Activated CD4-positive, alpha-beta memory T cell treated with anti-CD3 and anti-CD28 coated beads for 36 hours (primary cell): ENCODE measurements at regions of chr6 and their contacts with region 1.

Region 1: DNA sequence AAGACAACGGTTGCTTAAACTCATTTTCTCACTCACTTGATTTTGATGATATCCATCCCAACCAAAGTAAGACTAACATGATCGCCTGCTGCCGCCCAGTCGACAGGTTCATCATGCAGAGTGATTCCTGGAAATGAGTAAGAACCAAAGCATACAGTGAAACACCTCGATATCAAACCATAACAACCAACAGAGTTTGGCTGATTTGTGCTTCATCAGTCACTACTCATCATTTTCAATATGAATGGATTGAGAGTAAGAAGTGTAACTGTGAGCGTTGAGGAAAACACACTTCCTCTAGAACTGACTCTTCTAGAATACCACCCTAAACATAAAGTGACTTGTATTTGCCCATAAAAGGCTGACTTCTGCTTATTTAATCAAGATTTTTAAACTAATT is 29.2 kb upstream of the ALDH8A1 start:
- DNase-seq: peak; percentile 78
- H3K4me3 Mint-ChIP-seq: no peak overlapping the region
- H3K27ac Mint-ChIP-seq: peak overlapping the region; percentile 72
- H3K4me1 Mint-ChIP-seq: peaks cover 45% of the 10 kb centered on the region
- H3K27me3 Mint-ChIP-seq: no peaks in the 10 kb centered on the region

Region 2: GRCh38 chr6:134954272-134955000 is 24.7 kb before region 1 on chr6:
- CTCF ChIA-PET with region 1: no interaction called
- POLR2A ChIA-PET with region 1: no interaction called
- intact Hi-C with region 1: loop called (anchors 1 kb)
- DNase-seq: no peak
- H3K4me3 Mint-ChIP-seq: no peak overlapping the region
- H3K27ac Mint-ChIP-seq: no peak overlapping the region
- H3K4me1 Mint-ChIP-seq: peaks cover 16% of the 10 kb centered on the region
- H3K27me3 Mint-ChIP-seq: no peaks in the 10 kb centered on the region

Region 3: DNA sequence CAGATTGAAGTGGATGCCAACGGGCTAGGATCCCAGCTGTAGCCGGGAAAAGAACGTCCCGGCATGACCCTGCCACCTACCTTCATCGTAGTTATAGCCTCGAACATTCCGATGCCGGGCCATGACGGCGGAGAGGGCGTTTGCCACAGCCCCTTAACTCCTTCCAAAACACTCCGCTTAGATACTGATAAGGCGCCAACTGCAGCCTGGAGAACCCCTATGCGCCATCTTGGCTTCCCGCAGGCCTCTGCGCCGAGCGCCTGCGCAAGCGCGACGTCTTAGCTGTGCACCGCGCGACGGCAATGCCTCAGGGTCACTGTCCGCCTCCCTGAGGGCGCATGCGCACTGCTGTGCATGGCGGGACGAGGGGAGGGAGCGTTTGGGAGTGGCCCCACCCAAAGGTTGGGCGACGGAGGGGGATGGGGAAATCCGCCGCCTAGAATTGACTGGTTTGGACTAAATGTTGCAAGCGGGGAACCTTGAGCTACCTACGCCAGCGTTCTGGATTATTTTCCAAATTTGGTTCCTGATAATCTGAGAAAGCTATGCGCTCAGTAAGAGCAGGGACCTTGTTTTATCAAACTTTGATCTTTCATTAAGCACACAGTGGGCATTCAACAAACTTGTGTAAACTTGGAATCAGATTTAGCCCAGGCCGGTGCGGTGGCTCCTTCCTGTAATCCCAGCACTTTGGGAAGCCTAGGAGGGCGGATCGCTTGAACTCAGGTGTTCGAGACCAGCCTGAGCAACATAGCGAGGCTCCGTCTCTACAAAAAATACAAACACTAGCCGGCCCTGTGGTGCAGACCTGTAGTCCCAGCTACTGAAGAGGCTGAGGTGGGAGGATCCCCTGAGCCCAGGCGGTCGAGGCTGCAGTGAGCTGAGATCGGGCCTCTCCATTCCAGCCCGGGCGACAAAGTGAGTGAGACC is 75.7 kb after region 1 on chr6 and contains the start of gene HBS1L:
- CTCF ChIA-PET with region 1: no interaction called
- POLR2A ChIA-PET with region 1: interaction called, 3 read pairs
- intact Hi-C with region 1: loop called (anchors 1 kb)
- DNase-seq: peak; percentile 98
- H3K4me3 Mint-ChIP-seq: peak within 1 kb of the TSS; percentile 92
- H3K27ac Mint-ChIP-seq: peak within 1 kb of the TSS; percentile 96
- H3K4me1 Mint-ChIP-seq: peaks cover 34% of the 10 kb centered on the region
- H3K27me3 Mint-ChIP-seq: no peaks in the 10 kb centered on the region
- total RNA-seq, gene HBS1L: 117 to 123 TPM

Region 4: DNA sequence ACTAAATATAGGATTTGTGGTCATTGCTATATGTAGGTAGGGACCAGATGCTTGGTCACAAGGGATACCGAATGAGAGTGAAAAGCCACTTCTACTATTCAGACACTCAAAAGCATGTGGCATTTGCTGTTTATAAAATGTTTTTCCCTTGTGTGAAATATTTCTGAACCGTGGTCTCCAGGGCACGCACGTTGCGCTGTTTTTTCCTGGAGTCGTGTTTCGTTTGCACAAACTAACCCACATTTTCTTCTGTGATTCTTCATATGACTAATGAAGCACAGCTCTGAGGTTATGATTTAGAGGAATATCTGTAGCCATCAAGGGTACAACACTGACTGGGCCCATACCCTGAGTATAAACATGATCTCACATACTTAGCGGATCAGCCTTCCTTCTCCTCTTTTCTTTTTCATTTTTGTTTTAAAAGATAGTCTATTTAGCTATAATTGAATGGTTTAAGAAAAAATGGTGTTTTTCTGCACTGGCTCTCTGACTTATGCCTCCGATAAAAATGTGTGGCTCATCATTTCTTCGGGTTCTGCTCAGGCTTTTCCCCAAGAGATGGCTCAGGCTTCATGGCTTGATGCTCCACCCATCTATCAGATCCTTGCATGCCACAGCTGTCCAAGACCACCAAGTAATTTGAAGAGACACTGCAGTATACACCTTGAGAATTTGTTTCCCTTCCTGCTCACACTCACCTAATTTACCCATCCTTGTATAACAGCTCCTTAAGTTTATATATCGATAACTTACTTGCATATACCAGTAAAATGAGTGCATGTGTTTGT is 135.4 kb after region 1 on chr6:
- CTCF ChIA-PET with region 1: no interaction called
- POLR2A ChIA-PET with region 1: no interaction called
- intact Hi-C with region 1: loop called (anchors 1 kb)
- DNase-seq: peak; percentile 86
- H3K4me3 Mint-ChIP-seq: peak overlapping the region; percentile 44
- H3K27ac Mint-ChIP-seq: peak overlapping the region; percentile 96
- H3K4me1 Mint-ChIP-seq: peaks cover 65% of the 10 kb centered on the region
- H3K27me3 Mint-ChIP-seq: no peaks in the 10 kb centered on the region

Region 5: DNA sequence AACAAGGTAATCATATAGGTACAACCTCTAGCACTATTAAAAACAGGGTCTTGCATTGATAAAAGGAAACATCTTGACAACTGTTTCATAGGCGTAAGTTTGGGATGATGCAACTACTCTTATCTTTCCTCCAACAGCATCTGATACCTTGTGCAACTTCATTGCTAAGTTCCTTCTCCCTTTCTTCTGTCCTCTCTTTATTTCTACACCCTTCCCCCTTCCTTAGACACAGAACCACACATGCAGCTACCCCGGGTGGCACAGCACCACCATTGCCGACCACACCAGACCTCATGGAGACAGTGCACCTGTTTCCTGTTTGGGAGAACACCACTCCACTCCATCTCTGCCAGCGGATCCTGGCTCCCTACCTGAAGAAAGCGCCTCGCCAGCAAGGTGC is 216.4 kb after region 1 on chr6:
- CTCF ChIA-PET with region 1: no interaction called
- POLR2A ChIA-PET with region 1: no interaction called
- intact Hi-C with region 1: loop called (anchors 1 kb)
- DNase-seq: no peak
- H3K4me3 Mint-ChIP-seq: no peak overlapping the region
- H3K27ac Mint-ChIP-seq: no peak overlapping the region
- H3K4me1 Mint-ChIP-seq: peaks cover 24% of the 10 kb centered on the region
- H3K27me3 Mint-ChIP-seq: no peaks in the 10 kb centered on the region